A673 (cell line): ENCODE measurements at regions of chr12 and their contacts with region 1.

Region 1: DNA sequence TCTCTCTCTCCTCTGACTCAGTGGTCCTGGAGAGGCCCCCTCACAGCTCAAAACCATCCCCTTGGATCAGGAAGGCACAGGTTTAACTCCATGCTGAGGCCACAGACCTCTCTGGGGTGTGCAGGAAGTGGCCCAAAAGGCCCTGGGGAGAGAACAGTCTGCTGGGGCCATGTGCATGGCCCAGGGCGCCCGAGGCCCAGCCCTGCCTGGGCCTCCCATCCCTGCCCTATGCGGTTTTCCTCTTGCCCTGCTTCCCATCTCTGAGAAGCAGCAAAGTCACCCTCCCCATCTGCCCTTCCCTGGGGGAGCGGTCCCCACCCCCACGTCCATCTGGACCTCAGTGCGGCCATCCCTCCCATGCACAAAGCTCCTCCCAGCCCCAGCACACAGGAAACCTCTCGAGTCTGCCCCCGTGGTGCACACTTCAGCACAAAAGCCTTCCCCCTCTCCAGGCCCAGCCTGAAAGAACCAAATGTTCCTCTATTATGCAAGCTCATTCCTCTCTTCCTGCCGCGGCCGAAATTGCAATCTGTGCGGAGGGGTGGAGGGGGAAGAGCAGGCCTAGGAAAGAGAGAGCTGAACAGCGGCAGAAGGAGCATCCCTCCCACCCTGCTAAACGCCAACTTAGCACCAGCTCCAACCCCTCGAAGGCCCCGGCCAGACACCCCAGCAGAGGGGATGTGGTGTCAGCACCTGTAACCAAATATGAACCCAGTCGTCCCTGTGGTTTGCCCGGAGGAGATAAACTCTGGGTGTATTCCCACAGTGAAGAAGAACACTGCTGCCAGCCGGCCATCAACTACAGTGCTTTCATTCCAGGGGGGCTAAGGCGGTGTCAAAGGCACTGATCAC is 108.5 kb downstream of the SCARB1 start:
- DNase-seq: peak; percentile 94
- H3K4me3 ChIP-seq: no peak overlapping the region
- H3K27ac ChIP-seq: peak overlapping the region; percentile 32
- H3K4me1 ChIP-seq: peaks cover 40% of the 10 kb centered on the region
- H3K27me3 ChIP-seq: no peaks in the 10 kb centered on the region
- CTCF ChIP-seq: no peak

Region 2: DNA sequence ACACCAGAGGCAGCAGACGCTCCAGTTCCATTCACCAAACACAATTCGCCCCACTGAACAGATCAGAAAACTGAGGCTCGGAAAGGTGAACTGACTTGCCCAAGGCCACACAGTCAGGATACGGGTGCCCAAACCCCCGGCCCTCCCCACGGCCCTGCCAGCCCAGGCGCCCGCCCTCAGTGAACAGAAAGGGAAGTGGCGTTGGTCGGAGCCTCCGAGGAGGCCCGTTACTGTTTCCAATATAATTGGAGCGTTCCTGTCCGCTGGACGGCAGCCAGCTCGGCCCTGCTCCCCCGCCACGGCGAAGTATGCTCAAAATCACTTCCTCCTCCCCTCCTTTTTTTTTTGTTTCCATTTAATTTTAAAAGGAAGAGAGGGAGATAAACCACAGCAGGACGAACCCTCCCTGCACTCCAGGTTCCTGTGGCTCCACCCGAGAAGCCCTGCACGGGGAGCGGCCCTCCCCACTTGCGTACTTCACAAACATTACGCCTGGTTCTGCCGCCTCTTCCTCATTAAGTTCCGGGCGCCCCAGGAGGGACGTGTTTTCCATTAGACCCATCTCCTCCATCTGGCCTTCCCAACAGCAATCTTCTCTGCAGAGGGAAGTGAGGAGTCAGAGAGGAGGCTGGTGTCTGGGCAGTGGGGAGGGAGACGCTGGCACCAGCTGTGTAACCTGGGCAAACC is 248.9 kb before region 1 on chr12:
- CTCF ChIA-PET with region 1: no interaction called
- POLR2A ChIA-PET with region 1: no interaction called
- intact Hi-C with region 1: loop called (anchors 5 kb)
- DNase-seq: peak; percentile 98
- H3K4me3 ChIP-seq: peak overlapping the region; percentile 20
- H3K27ac ChIP-seq: peak overlapping the region; percentile 88
- H3K4me1 ChIP-seq: peaks cover 71% of the 10 kb centered on the region
- H3K27me3 ChIP-seq: no peaks in the 10 kb centered on the region
- CTCF ChIP-seq: 0 out of 2 replicates have a peak, but pooled peaks have one; percentile 22

Region 3: GRCh38 chr12:124720004-124720680 is 35.0 kb before region 1 on chr12:
- CTCF ChIA-PET with region 1: no interaction called
- POLR2A ChIA-PET with region 1: no interaction called
- intact Hi-C with region 1: loop called (anchors 5 kb)
- DNase-seq: no peak
- H3K4me3 ChIP-seq: no peak overlapping the region
- H3K27ac ChIP-seq: peak overlapping the region; percentile 64
- H3K4me1 ChIP-seq: peaks cover 44% of the 10 kb centered on the region
- H3K27me3 ChIP-seq: no peaks in the 10 kb centered on the region
- CTCF ChIP-seq: peak; percentile 42